ENCODE measurements at regions of chr17 and their contacts with region 1.

Region 1: GRCh38 chr17:2347547-2348307 is 10.4 kb downstream of the SGSM2 start:
- DNase-seq: no peak
- CTCF ChIP-seq: no peak

Region 2: DNA sequence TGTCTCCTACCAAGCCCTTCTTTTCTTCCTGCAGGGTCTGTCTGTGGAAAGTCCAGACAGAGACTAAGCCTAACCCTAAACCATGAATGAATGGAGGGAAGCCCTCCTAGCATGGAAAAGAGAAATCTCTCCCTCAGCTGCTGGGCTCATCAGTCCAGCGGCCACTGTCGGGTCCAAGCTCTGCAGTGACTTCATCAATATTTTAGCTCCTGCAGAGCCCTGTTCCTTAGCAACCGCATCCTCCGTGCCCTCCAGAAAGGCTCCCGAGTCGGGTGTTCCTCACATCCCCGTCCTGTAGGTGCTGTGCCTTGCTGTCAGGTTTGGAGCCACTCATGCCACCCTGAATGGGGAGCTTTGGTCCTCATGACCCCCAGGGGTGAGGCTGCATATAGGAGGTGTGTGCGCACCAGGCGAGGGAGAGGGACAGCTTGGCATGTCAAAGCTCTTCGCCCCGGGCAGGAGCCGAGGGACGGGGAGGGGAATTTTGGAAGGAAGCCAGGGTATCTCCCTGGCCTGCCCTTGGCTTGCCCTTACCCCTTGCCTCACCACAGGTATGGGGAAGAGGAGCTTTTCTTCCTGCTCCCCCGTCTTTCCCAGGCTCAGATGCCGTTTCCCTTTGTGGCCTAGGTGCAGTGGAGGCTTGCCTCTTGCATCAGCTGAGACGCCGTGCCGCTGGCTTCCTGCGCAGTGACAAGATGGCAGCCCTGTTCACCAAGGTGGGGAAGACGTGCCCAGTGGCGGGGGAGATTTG is 13.5 kb after region 1 on chr17:
- CTCF ChIA-PET with region 1: interaction called, 22 read pairs
- POLR2A ChIA-PET with region 1: no interaction called
- DNase-seq: no peak
- CTCF ChIP-seq: no peak

Region 3: DNA sequence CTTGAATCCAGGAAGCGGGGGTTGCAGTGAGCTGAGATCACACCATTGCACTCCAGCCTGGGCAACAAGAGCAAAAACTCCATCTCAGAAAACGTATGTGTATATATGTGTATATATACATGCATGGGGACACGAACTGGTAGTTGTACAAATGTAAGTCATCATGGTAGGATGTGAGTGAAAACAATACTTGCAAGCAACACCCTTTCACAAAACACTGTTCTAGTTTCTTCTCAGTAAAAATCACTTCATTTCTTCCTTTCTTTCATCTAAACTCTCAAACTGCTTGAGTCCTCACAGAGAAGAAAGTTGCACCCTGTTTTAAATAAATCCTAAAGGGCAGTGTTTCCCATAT is 112.2 kb after region 1 on chr17:
- CTCF ChIA-PET with region 1: no interaction called
- POLR2A ChIA-PET with region 1: no interaction called
- DNase-seq: no peak
- CTCF ChIP-seq: no peak

Measured in GM10248 (cell line).